ENCODE measurements at regions of chr1 and their contacts with region 1.

Region 1: GRCh38 chr1:152227310-152227928 is 3.4 kb upstream of the HRNR start:
- DNase-seq: peak; percentile 66
- H3K4me3 Mint-ChIP-seq: no peak overlapping the region
- H3K27ac Mint-ChIP-seq: no peak overlapping the region
- H3K4me1 Mint-ChIP-seq: peaks cover 17% of the 10 kb centered on the region
- H3K27me3 Mint-ChIP-seq: no peaks in the 10 kb centered on the region
- CTCF ChIP-seq: peak; percentile 79

Region 2: GRCh38 chr1:151828965-151829698 is 398.3 kb before region 1 on chr1:
- CTCF ChIA-PET with region 1: no interaction called
- POLR2A ChIA-PET with region 1: no interaction called
- intact Hi-C with region 1: no loop called
- DNase-seq: peak; percentile 82
- H3K4me3 Mint-ChIP-seq: no peak overlapping the region
- H3K27ac Mint-ChIP-seq: no peak overlapping the region
- H3K4me1 Mint-ChIP-seq: peaks cover 48% of the 10 kb centered on the region
- H3K27me3 Mint-ChIP-seq: no peaks in the 10 kb centered on the region
- CTCF ChIP-seq: no peak

Region 3: GRCh38 chr1:152244576-152245273 is 17.3 kb after region 1 on chr1:
- CTCF ChIA-PET with region 1: interaction called, 42 read pairs
- POLR2A ChIA-PET with region 1: interaction called, 16 read pairs
- intact Hi-C with region 1: no loop called
- DNase-seq: peak; percentile 24
- H3K4me3 Mint-ChIP-seq: no peak overlapping the region
- H3K27ac Mint-ChIP-seq: no peak overlapping the region
- H3K4me1 Mint-ChIP-seq: peaks cover 6% of the 10 kb centered on the region
- H3K27me3 Mint-ChIP-seq: no peaks in the 10 kb centered on the region
- CTCF ChIP-seq: no peak

Region 4: GRCh38 chr1:153597206-153597605 is 1369.8 kb after region 1 on chr1:
- CTCF ChIA-PET with region 1: no interaction called
- POLR2A ChIA-PET with region 1: no interaction called
- intact Hi-C with region 1: no loop called
- DNase-seq: peak; percentile 68
- H3K4me3 Mint-ChIP-seq: no peak overlapping the region
- H3K27ac Mint-ChIP-seq: peak overlapping the region; percentile 14
- H3K4me1 Mint-ChIP-seq: peaks cover 12% of the 10 kb centered on the region
- H3K27me3 Mint-ChIP-seq: no peaks in the 10 kb centered on the region
- CTCF ChIP-seq: no peak

Measured in MCF 10A (cell line).